Posterior vena cava (tissue), 2 donors: ENCODE measurements at regions of chrX and their contacts with region 1.

Region 1: GRCh38 chrX:40097497-40098263 is at the start of gene BCOR:
- DNase-seq: peak; percentile 90
- total RNA-seq, gene BCOR: 22.8 to 23.7 TPM

Region 2: GRCh38 chrX:40169193-40170101 is 71.8 kb after region 1 on chrX:
- intact Hi-C with region 1: loop called in 1 of 2 experiments (anchors 5 kb)
- DNase-seq: peak; percentile 85

Region 3: DNA sequence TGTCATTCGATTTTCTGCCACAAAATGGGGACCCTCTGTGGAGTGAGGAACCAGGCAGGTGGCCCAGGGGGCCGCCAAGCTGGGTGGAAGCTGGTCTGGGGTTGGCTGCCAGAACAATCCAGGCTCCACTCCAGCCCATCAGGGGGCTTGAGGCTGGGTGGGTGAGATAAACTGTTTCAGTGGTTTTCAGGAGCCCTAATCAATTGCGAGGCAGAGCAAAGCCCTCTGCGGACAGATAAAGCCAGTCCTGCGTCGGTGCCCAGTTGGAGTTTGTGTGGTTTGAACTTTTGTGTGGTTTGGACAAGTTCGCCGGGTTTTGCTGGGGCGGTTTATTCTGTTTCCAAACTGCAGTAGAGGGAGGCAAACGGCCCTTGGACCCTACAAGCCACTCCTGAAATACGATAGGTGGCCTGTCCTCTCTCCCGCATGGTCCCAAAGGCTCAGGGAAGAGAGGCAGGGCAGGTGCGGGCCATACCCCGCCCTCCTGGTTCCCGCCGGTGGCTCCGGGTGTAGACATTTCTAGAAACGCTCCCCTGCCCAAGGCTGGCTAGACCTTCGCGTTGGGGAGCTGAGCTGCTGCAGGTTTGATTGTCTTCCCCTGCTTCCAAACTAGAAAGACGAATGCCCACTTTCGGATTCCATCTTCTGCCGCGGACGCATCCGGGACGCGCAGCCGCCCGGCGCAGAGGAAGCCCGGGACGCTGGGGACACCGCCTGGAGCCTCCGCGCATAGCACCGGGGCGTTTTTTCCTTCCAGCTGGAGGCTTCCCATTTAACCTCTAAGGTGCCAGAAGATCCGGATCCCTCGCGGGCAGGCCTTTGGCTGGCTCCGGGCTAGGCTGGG is 169.0 kb after region 1 on chrX:
- intact Hi-C with region 1: loop called in 1 of 2 experiments (anchors 5 kb)
- DNase-seq: peak; percentile 87

Region 4: DNA sequence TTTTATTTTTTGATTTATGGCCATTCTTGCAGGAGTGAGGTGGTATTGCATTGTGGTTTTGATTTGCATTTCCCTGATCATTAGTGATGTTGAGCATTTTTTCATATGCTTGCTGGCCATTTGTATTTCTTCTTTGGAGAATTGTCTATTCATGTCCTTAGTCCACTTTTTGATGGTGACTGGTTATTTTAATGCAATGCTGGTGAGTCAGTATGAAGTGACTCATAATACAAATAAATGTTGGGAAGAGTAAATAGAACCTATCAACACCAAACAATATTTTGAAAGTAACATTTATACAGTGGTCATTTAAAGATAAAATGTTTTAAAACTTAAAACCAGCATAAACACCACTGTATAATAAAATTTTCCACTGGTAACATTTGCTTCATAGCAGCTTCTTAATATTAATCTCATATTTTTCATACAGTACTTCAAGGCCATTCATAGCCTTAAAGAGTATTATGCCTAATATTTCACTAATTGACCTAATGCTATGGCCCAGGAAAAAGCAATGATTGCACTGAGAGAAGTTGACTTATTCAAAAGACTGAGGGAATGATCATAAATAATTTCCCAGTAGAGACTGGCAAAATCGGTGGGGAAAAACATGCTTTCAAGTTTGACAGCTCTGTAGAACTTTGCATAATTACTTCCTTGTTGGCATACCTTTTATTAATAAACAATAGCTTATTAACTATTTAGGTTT is 1791.8 kb after region 1 on chrX:
- intact Hi-C with region 1: no loop called
- DNase-seq: no peak

Region 5: GRCh38 chrX:42096265-42096920 is 1998.7 kb after region 1 on chrX:
- intact Hi-C with region 1: no loop called
- DNase-seq: peak; percentile 81